ENCODE measurements at regions of chr20 and their contacts with region 1.

Region 1: GRCh38 chr20:1657556-1658334 is at the start of gene SIRPG:
- DNase-seq: peak; percentile 77
- ATAC-seq: peak; percentile 66
- H3K4me3 Mint-ChIP-seq: peak within 1 kb of the TSS; percentile 93
- H3K27ac Mint-ChIP-seq: peak within 1 kb of the TSS; percentile 95
- H3K4me1 Mint-ChIP-seq: peaks cover 82% of the 10 kb centered on the region
- H3K27me3 Mint-ChIP-seq: no peaks in the 10 kb centered on the region
- total RNA-seq, gene SIRPG: 112 to 123 TPM

Region 2: DNA sequence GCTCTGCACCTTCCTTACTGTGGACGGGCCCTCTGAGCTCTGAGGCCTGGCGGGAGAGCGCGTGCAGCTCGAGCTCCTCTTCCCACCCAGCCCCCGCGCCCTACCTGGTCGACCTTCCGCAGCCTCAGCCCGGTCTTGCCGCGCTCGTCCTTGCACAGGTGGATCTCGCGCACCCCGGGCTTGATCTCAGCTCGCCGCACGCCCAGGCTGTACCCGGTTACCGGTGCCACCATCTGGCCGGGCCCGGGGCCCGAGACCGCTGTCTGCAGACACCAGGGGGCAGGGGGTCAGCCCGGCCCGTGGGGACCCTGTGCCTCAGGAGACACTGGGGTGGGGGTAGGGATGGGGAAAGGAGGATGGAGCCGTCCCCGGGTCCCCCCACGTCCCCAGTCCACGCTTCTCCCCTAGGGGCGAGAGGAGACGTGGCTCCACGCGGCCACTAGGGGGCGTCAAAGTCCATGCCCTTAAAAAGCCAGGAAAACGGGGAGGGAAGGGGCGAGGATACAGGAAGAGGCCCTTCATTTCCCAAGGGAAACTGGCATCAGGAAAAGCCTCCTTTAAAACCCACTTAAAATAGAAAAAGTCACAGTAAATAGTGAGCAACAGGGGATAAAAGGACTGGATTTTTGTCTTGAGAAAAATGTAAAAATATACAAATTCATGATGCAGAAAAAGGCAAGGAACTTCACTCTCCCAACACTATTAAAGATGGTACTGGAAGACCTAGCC is 344.3 kb before region 1 on chr20:
- CTCF ChIA-PET with region 1: no interaction called
- POLR2A ChIA-PET with region 1: no interaction called
- DNase-seq: peak; percentile 66
- ATAC-seq: peak; percentile 62
- H3K4me3 Mint-ChIP-seq: no peak overlapping the region
- H3K27ac Mint-ChIP-seq: no peak overlapping the region
- H3K4me1 Mint-ChIP-seq: peaks cover 18% of the 10 kb centered on the region
- H3K27me3 Mint-ChIP-seq: peaks cover 6% of the 10 kb centered on the region

Region 3: GRCh38 chr20:1669304-1669703 is 11.6 kb after region 1 on chr20:
- CTCF ChIA-PET with region 1: interaction called, 11 read pairs
- POLR2A ChIA-PET with region 1: interaction called, 31 read pairs
- DNase-seq: peak; percentile 12
- ATAC-seq: no peak
- H3K4me3 Mint-ChIP-seq: no peak overlapping the region
- H3K27ac Mint-ChIP-seq: peak overlapping the region; percentile 12
- H3K4me1 Mint-ChIP-seq: peaks cover 95% of the 10 kb centered on the region
- H3K27me3 Mint-ChIP-seq: no peaks in the 10 kb centered on the region

Region 4: GRCh38 chr20:1674361-1674760 is 16.6 kb after region 1 on chr20:
- CTCF ChIA-PET with region 1: interaction called, 11 read pairs
- POLR2A ChIA-PET with region 1: interaction called, 13 read pairs
- DNase-seq: peak; percentile 81
- ATAC-seq: peak; percentile 86
- H3K4me3 Mint-ChIP-seq: peak overlapping the region; percentile 52
- H3K27ac Mint-ChIP-seq: peak overlapping the region; percentile 87
- H3K4me1 Mint-ChIP-seq: peaks cover 99% of the 10 kb centered on the region
- H3K27me3 Mint-ChIP-seq: no peaks in the 10 kb centered on the region

Region 5: GRCh38 chr20:1685304-1686052 is 27.7 kb after region 1 on chr20:
- CTCF ChIA-PET with region 1: interaction called, 3 read pairs
- POLR2A ChIA-PET with region 1: interaction called, 15 read pairs
- DNase-seq: peak; percentile 47
- ATAC-seq: peak; percentile 77
- H3K4me3 Mint-ChIP-seq: peak overlapping the region; percentile 73
- H3K27ac Mint-ChIP-seq: peak overlapping the region; percentile 84
- H3K4me1 Mint-ChIP-seq: peaks cover 66% of the 10 kb centered on the region
- H3K27me3 Mint-ChIP-seq: no peaks in the 10 kb centered on the region

Region 6: GRCh38 chr20:1934721-1935573 is 277.2 kb after region 1 on chr20:
- CTCF ChIA-PET with region 1: no interaction called
- POLR2A ChIA-PET with region 1: no interaction called
- DNase-seq: no peak
- ATAC-seq: no peak
- H3K4me3 Mint-ChIP-seq: no peak overlapping the region
- H3K27ac Mint-ChIP-seq: no peak overlapping the region
- H3K4me1 Mint-ChIP-seq: no peaks in the 10 kb centered on the region
- H3K27me3 Mint-ChIP-seq: peaks cover 5% of the 10 kb centered on the region

Measured in activated CD8-positive, alpha-beta T cell treated with anti-CD3 and anti-CD28 coated beads, Interleukin-2, amount 10 ng/mL, durations not matched to agents 7 days and 5 days (primary cell).